Aorta (tissue), 5 donors: ENCODE measurements at regions of chr20 and their contacts with region 1.

Region 1: DNA sequence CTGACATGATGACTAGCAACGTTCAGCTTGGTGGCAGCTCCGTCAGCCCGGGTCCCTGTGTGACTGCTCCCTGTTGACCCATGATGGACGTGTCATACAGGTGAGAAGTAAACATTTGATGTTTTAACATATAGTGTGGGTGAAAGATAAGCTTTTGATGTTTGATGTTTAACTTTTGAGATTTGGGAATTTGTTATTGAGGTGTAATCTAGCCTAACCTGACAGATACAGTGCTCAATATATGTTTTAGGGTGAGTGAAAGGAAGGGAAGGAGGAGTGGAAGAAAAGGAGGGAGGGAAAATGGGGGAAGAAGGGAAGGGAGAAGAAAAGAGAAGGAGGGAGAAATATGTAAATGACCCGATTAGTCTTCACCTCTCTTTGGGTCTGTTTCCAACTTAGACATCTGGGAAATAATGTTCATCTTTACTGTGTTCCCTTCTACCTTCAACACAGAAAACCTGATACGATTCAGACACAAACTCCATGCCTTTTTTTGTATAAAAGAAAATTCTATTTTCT is 763.3 kb upstream of the CHD6 start:
- DNase-seq: no peak
- ATAC-seq: no peak
- H3K4me3 ChIP-seq: no peak overlapping the region
- H3K27ac ChIP-seq: no peak overlapping the region
- H3K4me1 ChIP-seq: no peaks in the 10 kb centered on the region
- H3K27me3 ChIP-seq: no peaks in the 10 kb centered on the region

Region 2: DNA sequence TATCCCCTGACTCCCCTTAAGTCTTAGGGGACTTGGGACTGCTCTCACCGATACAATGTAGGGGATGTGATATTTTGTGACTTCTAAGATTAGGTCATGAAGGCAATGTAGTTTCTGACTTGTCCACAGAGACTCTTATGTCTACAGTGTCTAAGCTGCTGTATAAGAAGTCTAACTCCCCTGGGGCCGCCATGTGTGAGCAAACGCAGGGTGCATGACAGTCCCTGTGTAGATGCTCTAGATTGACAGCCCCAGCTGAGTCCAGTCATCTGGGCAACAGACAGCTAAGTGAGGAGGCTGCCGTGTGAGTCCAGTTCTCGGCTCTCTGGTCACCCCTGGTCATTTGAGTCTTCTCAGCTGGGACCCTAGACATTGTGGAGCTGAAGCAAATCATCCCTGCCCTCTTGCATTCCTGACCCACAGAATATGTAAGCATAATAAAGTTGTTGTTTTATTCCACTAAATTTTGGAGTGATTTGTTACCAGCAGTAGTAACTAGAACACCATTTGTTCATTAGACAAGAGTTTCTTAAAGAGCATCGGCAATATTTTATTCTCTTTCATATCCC is 20.0 kb before region 1 on chr20:
- intact Hi-C with region 1: loop called in 1 of 2 experiments (anchors 1 kb)
- DNase-seq: no peak
- ATAC-seq: no peak
- H3K4me3 ChIP-seq: no peak overlapping the region
- H3K27ac ChIP-seq: no peak overlapping the region
- H3K4me1 ChIP-seq: no peaks in the 10 kb centered on the region
- H3K27me3 ChIP-seq: no peaks in the 10 kb centered on the region